ENCODE measurements at regions of chr1 and their contacts with region 1.

Region 1: GRCh38 chr1:23114424-23115079 is 54.1 kb downstream of the LUZP1 start:
- DNase-seq: no peak
- ATAC-seq: no peak
- H3K4me3 ChIP-seq: peak overlapping the region in 1 of 3 experiments; percentile 2; a peak in 1 of 6 replicates
- H3K27ac ChIP-seq: peak overlapping the region; percentile 55
- H3K4me1 ChIP-seq: peaks cover 86% of the 10 kb centered on the region
- H3K27me3 ChIP-seq: no peaks in the 10 kb centered on the region
- CTCF ChIP-seq: no peak
- EP300 ChIP-seq: no peak
- POLR2A ChIP-seq: no peak
- RAD21 ChIP-seq: no peak

Region 2: GRCh38 chr1:22944346-22945055 is 170.1 kb before region 1 on chr1:
- CTCF ChIA-PET with region 1: no interaction called
- POLR2A ChIA-PET with region 1: no interaction called
- in situ Hi-C with region 1: no loop called
- intact Hi-C with region 1: no loop called
- DNase-seq: no peak
- ATAC-seq: no peak
- H3K4me3 ChIP-seq: no peak overlapping the region
- H3K27ac ChIP-seq: no peak overlapping the region
- H3K4me1 ChIP-seq: no peaks in the 10 kb centered on the region
- H3K27me3 ChIP-seq: peaks cover 0 to 1% of the 10 kb centered on the region in 2 experiments; a peak in 1 of 5 replicates
- CTCF ChIP-seq: no peak
- EP300 ChIP-seq: no peak
- POLR2A ChIP-seq: no peak
- RAD21 ChIP-seq: no peak

Region 3: GRCh38 chr1:23098463-23099170 is 15.9 kb before region 1 on chr1:
- CTCF ChIA-PET with region 1: no interaction called
- POLR2A ChIA-PET with region 1: no interaction called
- in situ Hi-C with region 1: no loop called
- intact Hi-C with region 1: no loop called
- DNase-seq: peak; percentile 62
- ATAC-seq: peak; percentile 55; the same call in 2 of the 3 replicates
- H3K4me3 ChIP-seq: no peak overlapping the region
- H3K27ac ChIP-seq: no peak overlapping the region
- H3K4me1 ChIP-seq: peaks cover 50% of the 10 kb centered on the region
- H3K27me3 ChIP-seq: no peaks in the 10 kb centered on the region
- CTCF ChIP-seq: peak; percentile 89
- EP300 ChIP-seq: no peak
- POLR2A ChIP-seq: no peak
- RAD21 ChIP-seq: peak; percentile 92

Region 4: DNA sequence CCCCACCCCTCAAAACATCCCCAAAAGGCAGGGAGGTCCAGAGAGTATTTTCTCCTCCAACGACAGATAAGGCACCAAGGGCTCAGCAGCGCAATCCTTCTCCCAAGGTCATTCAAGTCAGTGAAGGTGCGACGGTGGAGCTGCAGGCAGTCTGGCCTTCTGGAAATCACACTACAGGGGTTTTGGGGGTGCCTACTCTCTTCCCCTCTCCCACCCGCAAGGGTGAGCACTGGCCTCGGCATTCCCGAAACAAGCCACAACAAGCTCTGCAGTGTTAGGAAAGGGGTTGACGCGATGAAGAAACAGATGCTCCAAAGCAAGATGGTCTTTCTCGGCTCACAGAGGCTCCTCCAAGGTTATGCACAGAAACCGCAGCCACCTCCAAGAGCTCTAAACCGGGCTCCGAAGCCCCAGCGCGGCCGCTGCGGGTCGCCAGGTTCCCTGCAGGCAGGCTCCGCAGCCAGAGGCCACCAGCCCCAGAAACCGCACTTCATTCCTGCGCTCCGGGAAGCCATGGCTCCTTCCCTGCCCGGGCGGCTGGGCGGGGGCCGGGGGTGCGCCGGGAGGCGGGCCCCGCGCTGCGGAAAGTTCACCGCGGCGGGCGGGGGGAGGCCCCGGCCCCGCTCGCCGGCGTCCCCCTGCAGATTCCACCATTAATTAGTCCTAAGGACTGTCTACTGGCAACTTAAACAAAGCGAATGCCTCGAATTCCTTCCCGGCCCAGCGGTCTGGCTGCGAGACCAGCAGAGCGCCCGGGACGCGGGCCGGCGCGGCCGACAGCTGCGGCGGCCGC is 53.0 kb after region 1 on chr1:
- CTCF ChIA-PET with region 1: no interaction called
- POLR2A ChIA-PET with region 1: interaction called, 5 read pairs
- in situ Hi-C with region 1: no loop called
- intact Hi-C with region 1: loop called (anchors 1 kb)
- DNase-seq: peak; percentile 50
- ATAC-seq: peak; percentile 72
- H3K4me3 ChIP-seq: peak overlapping the region; percentile 95 to 100 (median 96)
- H3K27ac ChIP-seq: peak overlapping the region; percentile 86
- H3K4me1 ChIP-seq: peaks cover 55% of the 10 kb centered on the region
- H3K27me3 ChIP-seq: no peaks in the 10 kb centered on the region; a peak in 1 of 5 replicates
- CTCF ChIP-seq: no peak
- EP300 ChIP-seq: no peak
- POLR2A ChIP-seq: 0 out of 4 replicates have a peak, but pooled peaks of 1 of the 2 experiments have one; percentile 20
- RAD21 ChIP-seq: no peak